Aorta (tissue), 5 donors: ENCODE measurements at regions of chr11 and their contacts with region 1.

Region 1: GRCh38 chr11:79940151-79940550 is 499.3 kb upstream of the TENM4 start:
- DNase-seq: no peak
- ATAC-seq: no peak
- H3K4me3 ChIP-seq: no peak overlapping the region
- H3K27ac ChIP-seq: no peak overlapping the region
- H3K4me1 ChIP-seq: no peaks in the 10 kb centered on the region
- H3K27me3 ChIP-seq: peaks cover 0 to 2% of the 10 kb centered on the region in 2 donors

Region 2: GRCh38 chr11:79973721-79974617 is 33.8 kb after region 1 on chr11:
- intact Hi-C with region 1: no loop called
- DNase-seq: no peak
- ATAC-seq: peak; percentile 48
- H3K4me3 ChIP-seq: no peak overlapping the region
- H3K27ac ChIP-seq: no peak overlapping the region
- H3K4me1 ChIP-seq: no peaks in the 10 kb centered on the region
- H3K27me3 ChIP-seq: no peaks in the 10 kb centered on the region

Region 3: GRCh38 chr11:80007616-80008015 is 67.5 kb after region 1 on chr11:
- intact Hi-C with region 1: loop called in 1 of 2 experiments (anchors 10 kb)
- DNase-seq: no peak
- ATAC-seq: no peak
- H3K4me3 ChIP-seq: no peak overlapping the region
- H3K27ac ChIP-seq: no peak overlapping the region
- H3K4me1 ChIP-seq: no peaks in the 10 kb centered on the region
- H3K27me3 ChIP-seq: no peaks in the 10 kb centered on the region